ENCODE measurements at regions of chr2 and their contacts with region 1.

Region 1: GRCh38 chr2:156589381-156590079 is 153.4 kb downstream of the GPD2 start:
- DNase-seq: peak; percentile 60
- H3K4me3 ChIP-seq: no peak overlapping the region
- H3K27ac ChIP-seq: no peak overlapping the region
- H3K4me1 ChIP-seq: no peaks in the 10 kb centered on the region
- H3K27me3 ChIP-seq: no peaks in the 10 kb centered on the region
- CTCF ChIP-seq: peak; percentile 19 to 40
- POLR2A ChIP-seq: no peak

Region 2: DNA sequence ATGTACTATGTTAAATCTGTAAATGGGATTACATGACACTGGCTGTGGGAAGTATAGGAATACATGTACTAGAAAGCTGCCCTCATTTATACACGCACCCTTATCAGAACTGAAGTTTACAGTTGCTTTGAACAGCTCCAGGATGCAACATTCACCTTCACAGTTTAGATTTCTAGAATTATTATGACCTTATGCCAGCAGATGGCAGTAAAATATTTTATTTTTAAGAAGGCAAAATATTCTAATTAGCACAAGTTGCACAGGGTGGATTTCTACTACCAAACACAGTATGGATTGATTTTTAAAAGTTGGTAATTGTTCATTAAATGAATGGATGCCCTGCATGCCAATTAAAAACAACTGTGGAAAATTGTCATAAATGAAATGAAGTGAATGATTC is 1220.6 kb before region 1 on chr2:
- CTCF ChIA-PET with region 1: interaction called, 18 read pairs
- POLR2A ChIA-PET with region 1: no interaction called
- dilution Hi-C with region 1: no loop called
- intact Hi-C with region 1: loop called (anchors 1 kb)
- DNase-seq: peak; percentile 24
- H3K4me3 ChIP-seq: no peak overlapping the region
- H3K27ac ChIP-seq: no peak overlapping the region
- H3K4me1 ChIP-seq: no peaks in the 10 kb centered on the region
- H3K27me3 ChIP-seq: no peaks in the 10 kb centered on the region
- CTCF ChIP-seq: no peak
- POLR2A ChIP-seq: no peak

Region 3: DNA sequence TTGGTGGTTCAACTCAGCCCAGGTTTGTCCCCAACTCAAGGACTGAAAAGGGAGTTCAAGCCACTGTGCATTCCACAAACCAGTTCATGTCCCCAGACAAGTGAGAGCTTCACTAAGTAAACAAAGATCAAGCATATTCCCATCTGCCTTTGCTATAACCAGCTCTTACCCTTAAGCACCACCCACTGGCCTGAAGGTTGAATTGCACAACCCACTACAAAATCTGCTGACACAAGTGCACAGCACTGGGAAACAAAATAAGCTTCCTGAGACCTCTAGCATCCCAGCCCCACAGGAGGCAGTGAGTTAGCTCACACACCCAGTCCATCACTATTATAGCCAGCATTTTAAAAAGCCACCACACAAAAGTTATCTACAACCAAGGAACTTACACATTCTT is 773.6 kb before region 1 on chr2:
- CTCF ChIA-PET with region 1: interaction called, 10 read pairs
- POLR2A ChIA-PET with region 1: no interaction called
- dilution Hi-C with region 1: no loop called
- intact Hi-C with region 1: loop called (anchors 5 kb)
- DNase-seq: peak; percentile 67
- H3K4me3 ChIP-seq: no peak overlapping the region
- H3K27ac ChIP-seq: no peak overlapping the region
- H3K4me1 ChIP-seq: no peaks in the 10 kb centered on the region
- H3K27me3 ChIP-seq: no peaks in the 10 kb centered on the region
- CTCF ChIP-seq: peak; percentile 45 to 69
- POLR2A ChIP-seq: no peak

Region 4: GRCh38 chr2:156077041-156077735 is 512.3 kb before region 1 on chr2:
- CTCF ChIA-PET with region 1: no interaction called
- POLR2A ChIA-PET with region 1: no interaction called
- dilution Hi-C with region 1: no loop called
- intact Hi-C with region 1: loop called (anchors 10 kb)
- DNase-seq: no peak
- H3K4me3 ChIP-seq: no peak overlapping the region
- H3K27ac ChIP-seq: no peak overlapping the region
- H3K4me1 ChIP-seq: no peaks in the 10 kb centered on the region
- H3K27me3 ChIP-seq: no peaks in the 10 kb centered on the region
- CTCF ChIP-seq: no peak
- POLR2A ChIP-seq: no peak

Region 5: GRCh38 chr2:156192468-156192867 is 397.1 kb before region 1 on chr2:
- CTCF ChIA-PET with region 1: interaction called, 6 read pairs
- POLR2A ChIA-PET with region 1: no interaction called
- dilution Hi-C with region 1: no loop called
- intact Hi-C with region 1: loop called (anchors 2 kb)
- DNase-seq: peak; percentile 10
- H3K4me3 ChIP-seq: no peak overlapping the region
- H3K27ac ChIP-seq: no peak overlapping the region
- H3K4me1 ChIP-seq: no peaks in the 10 kb centered on the region
- H3K27me3 ChIP-seq: no peaks in the 10 kb centered on the region
- CTCF ChIP-seq: peak in 1 of 2 donors; percentile 12
- POLR2A ChIP-seq: no peak

Region 6: DNA sequence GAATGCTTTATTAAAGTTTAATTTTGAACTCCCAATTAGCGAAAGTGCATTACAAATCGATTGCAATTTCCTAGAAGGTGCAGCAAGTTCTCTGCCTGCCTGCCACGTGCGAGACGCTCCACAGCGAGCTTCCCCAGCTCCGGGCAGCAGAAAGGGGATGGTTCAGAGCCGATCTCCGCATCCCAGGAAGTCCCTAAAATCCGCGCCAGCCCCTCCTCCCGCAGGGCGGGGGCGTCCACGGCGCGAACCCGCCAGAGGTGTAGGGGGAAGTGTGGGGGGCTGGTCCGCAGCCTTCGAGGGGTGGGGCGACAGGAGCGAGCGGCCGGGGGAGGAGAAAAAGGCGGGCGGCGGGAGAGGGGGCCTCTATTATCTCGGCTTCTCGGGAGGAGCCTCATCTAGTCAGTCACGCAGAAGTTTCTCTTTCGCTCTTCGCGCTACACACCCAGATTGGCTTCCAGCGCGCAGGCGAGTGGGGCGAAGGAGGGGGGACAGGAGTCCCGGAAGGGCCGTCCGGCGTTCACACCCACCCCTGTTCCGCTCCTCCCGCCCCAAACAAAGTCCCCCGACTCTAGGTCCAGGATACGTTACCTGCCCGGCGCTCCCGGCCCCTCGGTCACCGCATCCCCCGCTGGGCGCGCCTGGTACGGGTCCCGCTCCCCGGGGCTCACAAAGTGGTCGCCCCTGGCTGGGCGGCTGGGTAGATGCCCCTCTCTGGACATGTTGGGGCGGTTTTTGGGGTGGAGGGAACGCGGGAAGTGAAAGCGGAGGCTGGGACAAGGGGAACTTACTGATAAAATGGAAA is 247.9 kb before region 1 on chr2:
- CTCF ChIA-PET with region 1: interaction called, 93 read pairs
- POLR2A ChIA-PET with region 1: no interaction called
- dilution Hi-C with region 1: no loop called
- intact Hi-C with region 1: no loop called
- DNase-seq: peak; percentile 83
- H3K4me3 ChIP-seq: peak overlapping the region; percentile 69 to 97 (median 87)
- H3K27ac ChIP-seq: peak overlapping the region; percentile 100
- H3K4me1 ChIP-seq: peaks cover 11% of the 10 kb centered on the region
- H3K27me3 ChIP-seq: no peaks in the 10 kb centered on the region
- CTCF ChIP-seq: no peak
- POLR2A ChIP-seq: peak; percentile 35

Region 7: DNA sequence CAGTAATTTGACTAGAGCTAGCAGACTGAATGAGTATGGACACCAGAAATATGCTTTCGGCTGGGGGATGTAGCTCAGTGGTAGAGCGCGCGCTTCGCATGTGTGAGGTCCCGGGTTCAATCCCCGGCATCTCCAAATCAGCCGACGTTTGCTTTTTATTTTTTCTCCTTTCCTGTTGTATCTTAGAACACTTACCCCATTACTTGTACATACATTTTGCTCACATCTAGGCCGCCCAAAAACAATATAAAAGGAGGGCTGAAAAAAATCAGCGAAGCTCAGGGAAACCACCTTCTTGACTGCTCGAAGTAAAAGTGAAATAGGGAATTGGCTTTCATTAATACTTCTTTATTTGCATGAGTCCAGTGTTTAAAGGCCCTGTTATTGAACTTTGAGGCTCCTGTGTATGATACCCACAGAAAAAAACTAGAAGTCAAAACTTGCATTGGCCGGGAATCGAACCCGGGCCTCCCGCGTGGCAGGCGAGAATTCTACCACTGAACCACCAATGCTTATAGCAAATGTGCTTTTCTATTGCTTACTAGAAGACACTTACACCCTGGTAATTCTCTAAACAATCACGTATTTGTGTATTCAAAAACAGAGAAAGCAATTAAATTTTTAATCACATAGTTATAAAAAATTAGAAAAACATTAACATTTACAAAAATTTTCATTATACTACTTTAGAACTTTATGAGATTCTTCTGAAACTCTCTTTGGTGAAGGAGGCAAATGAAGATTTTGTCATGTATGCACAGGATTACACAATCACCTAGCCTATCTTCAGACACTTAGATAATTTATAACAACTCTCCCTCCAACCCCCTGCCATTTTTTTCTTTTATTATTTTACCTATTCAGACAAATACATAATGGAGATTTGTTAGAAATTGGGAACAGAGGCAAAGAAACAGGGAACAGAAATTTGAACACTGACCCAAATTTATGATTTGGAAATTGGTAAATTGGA is 188.5 kb before region 1 on chr2:
- CTCF ChIA-PET with region 1: interaction called, 9 read pairs
- POLR2A ChIA-PET with region 1: no interaction called
- dilution Hi-C with region 1: no loop called
- intact Hi-C with region 1: loop called (anchors 1 kb)
- DNase-seq: peak; percentile 91
- H3K4me3 ChIP-seq: peak overlapping the region; percentile 48 to 71 (median 49)
- H3K27ac ChIP-seq: peak overlapping the region; percentile 41
- H3K4me1 ChIP-seq: peaks cover 5% of the 10 kb centered on the region
- H3K27me3 ChIP-seq: peaks cover 0 to 5% of the 10 kb centered on the region in 2 experiments
- CTCF ChIP-seq: no peak
- POLR2A ChIP-seq: no peak

Region 8: DNA sequence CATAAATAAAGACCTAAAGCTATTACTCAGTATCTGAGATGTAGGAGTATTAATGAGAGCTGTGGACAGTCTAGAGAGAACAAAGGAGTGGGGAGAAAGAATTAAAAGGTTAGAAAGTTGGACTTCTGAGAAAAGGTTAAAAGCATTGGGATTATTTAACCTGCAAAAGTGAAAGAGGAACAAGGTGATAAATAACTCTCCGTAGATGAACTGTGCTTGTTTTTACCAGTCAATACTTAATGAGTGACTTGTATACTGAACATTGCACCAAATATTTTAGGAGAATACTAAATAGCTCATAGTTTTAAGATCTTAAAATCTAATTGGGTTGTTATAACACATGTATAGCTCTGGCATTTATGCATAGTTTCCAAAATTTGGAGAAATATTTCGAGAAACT is 15.8 kb before region 1 on chr2:
- CTCF ChIA-PET with region 1: no interaction called
- POLR2A ChIA-PET with region 1: no interaction called
- dilution Hi-C with region 1: no loop called
- intact Hi-C with region 1: no loop called
- DNase-seq: no peak
- H3K4me3 ChIP-seq: no peak overlapping the region
- H3K27ac ChIP-seq: no peak overlapping the region
- H3K4me1 ChIP-seq: no peaks in the 10 kb centered on the region
- H3K27me3 ChIP-seq: no peaks in the 10 kb centered on the region
- CTCF ChIP-seq: no peak
- POLR2A ChIP-seq: no peak

Region 9: DNA sequence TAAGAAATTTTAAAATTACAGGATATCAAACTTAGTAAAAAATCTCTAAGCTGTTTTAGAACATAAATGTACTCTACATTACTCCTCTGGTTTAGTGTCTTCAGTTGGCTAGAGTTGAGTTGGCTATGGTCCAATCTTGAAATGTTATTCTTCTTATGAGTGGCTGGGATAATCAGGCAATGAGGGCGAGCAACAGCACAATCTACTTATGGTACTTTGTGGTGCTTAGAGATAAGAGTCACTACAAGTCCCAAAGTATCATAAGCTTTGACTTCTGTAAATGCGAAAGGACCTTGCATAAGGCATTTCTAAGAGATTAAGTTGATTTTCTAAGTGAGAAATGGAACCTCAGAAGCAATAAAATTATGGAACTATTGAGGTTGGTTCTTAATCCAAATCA is 208.3 kb after region 1 on chr2:
- CTCF ChIA-PET with region 1: no interaction called
- POLR2A ChIA-PET with region 1: no interaction called
- dilution Hi-C with region 1: no loop called
- intact Hi-C with region 1: no loop called
- DNase-seq: no peak
- H3K4me3 ChIP-seq: no peak overlapping the region
- H3K27ac ChIP-seq: no peak overlapping the region
- H3K4me1 ChIP-seq: no peaks in the 10 kb centered on the region
- H3K27me3 ChIP-seq: no peaks in the 10 kb centered on the region
- CTCF ChIP-seq: no peak
- POLR2A ChIP-seq: no peak

Measured in endothelial cell of umbilical vein (primary cell).